CD4-positive, alpha-beta T cell (primary cell): ENCODE measurements at regions of chr15 and their contacts with region 1.

Region 1: DNA sequence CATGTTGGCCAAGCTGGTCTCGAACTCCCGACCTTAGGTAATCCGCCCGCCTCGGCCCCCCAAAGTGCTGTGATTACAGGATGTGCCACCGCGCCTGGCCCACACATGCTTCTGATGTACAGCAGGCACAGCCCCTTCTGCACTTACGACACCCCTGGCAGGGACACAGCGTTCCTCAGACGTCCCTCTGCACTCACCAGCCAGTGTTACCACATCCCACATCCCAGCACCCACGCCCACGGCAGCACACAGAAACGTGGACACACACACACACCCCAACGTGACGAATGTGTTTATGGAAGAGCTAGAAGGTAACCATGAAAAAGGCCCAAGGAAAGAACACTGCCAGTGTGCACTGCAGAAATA is 576 bp upstream of the RPAP1 start:
- DNase-seq: peak in 3 of 14 experiments; percentile 23 to 50 (median 44)
- ATAC-seq: no peak
- H3K4me3 ChIP-seq: peak overlapping the region; percentile 98
- H3K4me3 Mint-ChIP-seq: peak overlapping the region; percentile 98
- H3K27ac ChIP-seq: no peak overlapping the region
- H3K27ac Mint-ChIP-seq: peak overlapping the region; percentile 85
- H3K4me1 ChIP-seq: peaks cover 16% of the 10 kb centered on the region
- H3K4me1 Mint-ChIP-seq: peaks cover 29% of the 10 kb centered on the region
- H3K27me3 ChIP-seq: no peaks in the 10 kb centered on the region
- H3K27me3 Mint-ChIP-seq: no peaks in the 10 kb centered on the region
- CTCF ChIP-seq: no peak

Region 2: DNA sequence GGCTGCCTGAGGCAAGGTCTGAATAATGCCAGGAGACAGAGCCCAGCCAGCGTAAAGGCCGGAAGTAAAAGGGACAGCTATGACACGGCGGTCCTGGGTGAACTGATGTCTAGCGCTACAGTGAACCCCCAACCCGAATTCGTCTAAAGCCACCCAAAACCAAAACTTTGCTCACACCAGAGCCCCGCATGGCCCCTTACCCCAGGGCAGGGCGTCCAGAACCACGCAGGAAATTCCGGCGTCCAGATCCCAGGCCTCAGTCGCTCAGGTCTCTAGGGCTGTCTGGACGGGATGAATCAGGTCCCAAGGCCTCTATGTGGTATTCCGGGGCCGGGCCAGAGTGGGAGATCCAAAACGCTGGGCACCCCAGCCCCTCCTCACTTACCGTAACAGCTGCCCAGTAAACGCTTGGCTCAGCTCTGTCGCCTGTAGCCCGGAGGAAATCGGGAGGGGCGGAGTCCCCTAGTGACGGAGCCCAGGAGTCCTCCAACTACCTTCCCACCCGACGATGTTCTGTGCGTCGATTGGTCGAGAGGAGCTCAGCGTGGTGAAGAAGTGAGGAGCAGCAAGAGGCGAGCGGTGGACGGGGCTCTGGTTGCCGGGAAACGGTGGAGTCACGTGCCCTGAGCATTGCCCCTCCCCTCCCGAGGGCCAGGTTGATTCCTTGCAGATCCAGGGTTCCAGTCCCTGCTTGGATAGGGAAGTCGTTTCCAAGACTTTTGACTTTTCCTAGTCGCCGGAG is 979.9 kb before region 1 on chr15 and contains the start of gene CCDC32:
- CTCF ChIA-PET with region 1: no interaction called
- POLR2A ChIA-PET with region 1: no interaction called
- intact Hi-C with region 1: loop called in 1 of 2 experiments (anchors 10 kb)
- DNase-seq: peak; percentile 84 to 99 (median 92)
- ATAC-seq: peak; percentile 93
- H3K4me3 ChIP-seq: peak within 1 kb of the TSS; percentile 76
- H3K4me3 Mint-ChIP-seq: peak within 1 kb of the TSS; percentile 97
- H3K27ac ChIP-seq: peak within 1 kb of the TSS; percentile 85 to 89
- H3K27ac Mint-ChIP-seq: peak within 1 kb of the TSS; percentile 88
- H3K4me1 ChIP-seq: peaks cover 34% of the 10 kb centered on the region
- H3K4me1 Mint-ChIP-seq: peaks cover 43% of the 10 kb centered on the region
- H3K27me3 ChIP-seq: no peaks in the 10 kb centered on the region
- H3K27me3 Mint-ChIP-seq: no peaks in the 10 kb centered on the region
- CTCF ChIP-seq: no peak
- total RNA-seq, gene CCDC32: 20.9 to 21.3 TPM

Region 3: DNA sequence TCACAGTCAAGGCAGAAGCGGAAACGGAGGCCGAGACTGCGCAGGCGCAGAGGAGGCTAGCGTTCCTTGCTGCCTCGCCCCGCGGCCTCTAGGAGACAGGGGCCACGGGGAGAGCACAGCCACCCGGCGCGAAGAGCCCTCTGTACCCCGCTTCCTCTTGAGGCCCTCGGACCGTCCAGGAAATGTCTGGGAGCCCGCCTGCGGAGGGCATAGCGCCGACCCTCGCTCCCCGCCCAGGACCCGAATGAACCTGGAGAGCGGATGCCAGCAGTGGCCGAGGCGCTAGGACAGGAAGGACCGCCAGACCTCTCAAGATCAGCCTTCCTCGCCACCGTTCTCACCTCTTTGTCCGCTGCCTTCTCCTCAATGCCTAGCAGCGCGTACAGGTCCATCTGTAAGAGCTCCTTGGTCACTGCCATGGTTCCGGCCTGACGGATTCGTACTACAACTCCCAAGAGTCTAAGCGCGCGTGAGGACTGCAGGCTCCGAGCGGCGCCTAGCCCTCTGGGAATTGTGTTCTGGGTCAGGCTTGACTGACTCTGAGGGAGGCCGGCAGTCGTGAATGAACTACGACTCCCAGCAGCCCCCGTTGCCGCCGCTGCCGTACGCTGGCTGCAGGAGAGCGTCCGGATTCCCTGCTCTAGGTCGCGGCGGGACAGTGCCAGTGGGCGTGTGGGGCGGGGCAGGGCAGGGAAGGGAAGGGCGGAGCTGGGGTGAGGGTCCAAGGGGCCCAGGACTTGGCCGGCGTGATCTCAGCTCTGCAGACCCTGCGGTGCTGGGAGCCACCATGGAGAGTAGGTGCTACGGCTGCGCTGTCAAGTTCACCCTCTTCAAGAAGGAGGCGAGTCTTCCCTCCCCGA is 737.4 kb before region 1 on chr15 and contains the starts of genes DNAJC17 and ZFYVE19:
- CTCF ChIA-PET with region 1: no interaction called
- POLR2A ChIA-PET with region 1: no interaction called
- intact Hi-C with region 1: loop called in 1 of 2 experiments (anchors 5 kb)
- DNase-seq: peak; percentile 86 to 97 (median 92)
- ATAC-seq: peak; percentile 97
- H3K4me3 ChIP-seq: peak within 1 kb of the TSS; percentile 80
- H3K4me3 Mint-ChIP-seq: peak within 1 kb of the TSS; percentile 96
- H3K27ac ChIP-seq: peak within 1 kb of the TSS; percentile 90 to 93
- H3K27ac Mint-ChIP-seq: peak within 1 kb of the TSS; percentile 91
- H3K4me1 ChIP-seq: peaks cover 30% of the 10 kb centered on the region
- H3K4me1 Mint-ChIP-seq: peaks cover 23% of the 10 kb centered on the region
- H3K27me3 ChIP-seq: no peaks in the 10 kb centered on the region
- H3K27me3 Mint-ChIP-seq: no peaks in the 10 kb centered on the region
- CTCF ChIP-seq: no peak
- total RNA-seq, gene DNAJC17: 14.4 to 17.9 TPM
- total RNA-seq, gene ZFYVE19: 12.0 to 13.0 TPM

Region 4: DNA sequence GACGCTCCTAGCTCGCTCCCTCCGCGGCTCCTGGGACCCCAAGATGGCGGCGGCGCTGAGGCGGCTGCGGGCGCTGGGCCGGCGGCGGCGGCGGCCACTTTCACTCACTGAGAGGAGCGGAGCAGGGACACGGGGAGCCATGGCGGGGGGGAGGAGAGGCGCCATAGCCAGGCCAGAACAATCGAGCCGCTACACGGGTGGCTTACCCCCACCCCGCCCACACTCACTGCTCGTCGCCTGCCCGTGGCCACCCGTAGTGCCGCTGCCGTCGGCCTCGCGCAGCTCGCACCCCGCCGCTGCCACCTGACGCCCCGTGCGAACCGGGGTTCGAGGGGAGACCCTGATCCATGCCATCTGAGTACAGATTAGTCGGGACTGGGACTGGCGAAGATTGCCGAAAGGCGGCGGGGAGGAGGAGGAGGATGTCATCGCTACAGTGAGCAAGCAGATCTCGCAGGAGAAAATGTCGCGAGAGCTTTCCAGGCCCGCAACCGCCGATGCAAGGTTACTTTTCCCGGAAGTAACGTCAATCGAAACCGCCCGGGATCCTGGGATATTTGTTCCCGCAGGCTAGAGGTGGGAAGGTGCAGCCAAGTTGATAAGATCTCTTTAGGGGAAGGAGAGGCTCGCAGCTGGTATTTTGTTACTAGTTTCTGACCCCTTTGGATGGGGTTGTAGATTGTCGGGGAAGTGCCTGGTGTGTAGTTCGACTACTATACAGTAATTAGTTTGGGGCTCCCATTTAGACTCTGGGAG is 428.3 kb before region 1 on chr15 and contains the start of gene INO80:
- CTCF ChIA-PET with region 1: no interaction called
- POLR2A ChIA-PET with region 1: interaction called, 5 read pairs
- intact Hi-C with region 1: loop called in 1 of 2 experiments (anchors 10 kb)
- DNase-seq: peak; percentile 90 to 98 (median 95)
- ATAC-seq: peak; percentile 79
- H3K4me3 ChIP-seq: peak within 1 kb of the TSS; percentile 99
- H3K4me3 Mint-ChIP-seq: peak within 1 kb of the TSS; percentile 93
- H3K27ac ChIP-seq: peak within 1 kb of the TSS; percentile 79 to 91
- H3K27ac Mint-ChIP-seq: peak within 1 kb of the TSS; percentile 98
- H3K4me1 ChIP-seq: peaks cover 20% of the 10 kb centered on the region
- H3K4me1 Mint-ChIP-seq: peaks cover 25% of the 10 kb centered on the region
- H3K27me3 ChIP-seq: no peaks in the 10 kb centered on the region
- H3K27me3 Mint-ChIP-seq: no peaks in the 10 kb centered on the region
- CTCF ChIP-seq: no peak
- total RNA-seq, gene INO80: 20.3 to 22.9 TPM

Region 5: GRCh38 chr15:41331833-41332787 is 212.5 kb before region 1 on chr15 and contains the start of gene OIP5:
- CTCF ChIA-PET with region 1: no interaction called
- POLR2A ChIA-PET with region 1: no interaction called
- intact Hi-C with region 1: loop called in 1 of 2 experiments (anchors 10 kb)
- DNase-seq: peak; percentile 94 to 99 (median 97)
- ATAC-seq: peak; percentile 96
- H3K4me3 ChIP-seq: peak within 1 kb of the TSS; percentile 77
- H3K4me3 Mint-ChIP-seq: peak within 1 kb of the TSS; percentile 95
- H3K27ac ChIP-seq: peak within 1 kb of the TSS in 1 of 2 donors; percentile 38
- H3K27ac Mint-ChIP-seq: peak within 1 kb of the TSS; percentile 78
- H3K4me1 ChIP-seq: peaks cover 21% of the 10 kb centered on the region
- H3K4me1 Mint-ChIP-seq: peaks cover 19% of the 10 kb centered on the region
- H3K27me3 ChIP-seq: no peaks in the 10 kb centered on the region
- H3K27me3 Mint-ChIP-seq: no peaks in the 10 kb centered on the region
- CTCF ChIP-seq: peak; percentile 58
- total RNA-seq, gene OIP5: 0.20 to 0.36 TPM

Region 6: DNA sequence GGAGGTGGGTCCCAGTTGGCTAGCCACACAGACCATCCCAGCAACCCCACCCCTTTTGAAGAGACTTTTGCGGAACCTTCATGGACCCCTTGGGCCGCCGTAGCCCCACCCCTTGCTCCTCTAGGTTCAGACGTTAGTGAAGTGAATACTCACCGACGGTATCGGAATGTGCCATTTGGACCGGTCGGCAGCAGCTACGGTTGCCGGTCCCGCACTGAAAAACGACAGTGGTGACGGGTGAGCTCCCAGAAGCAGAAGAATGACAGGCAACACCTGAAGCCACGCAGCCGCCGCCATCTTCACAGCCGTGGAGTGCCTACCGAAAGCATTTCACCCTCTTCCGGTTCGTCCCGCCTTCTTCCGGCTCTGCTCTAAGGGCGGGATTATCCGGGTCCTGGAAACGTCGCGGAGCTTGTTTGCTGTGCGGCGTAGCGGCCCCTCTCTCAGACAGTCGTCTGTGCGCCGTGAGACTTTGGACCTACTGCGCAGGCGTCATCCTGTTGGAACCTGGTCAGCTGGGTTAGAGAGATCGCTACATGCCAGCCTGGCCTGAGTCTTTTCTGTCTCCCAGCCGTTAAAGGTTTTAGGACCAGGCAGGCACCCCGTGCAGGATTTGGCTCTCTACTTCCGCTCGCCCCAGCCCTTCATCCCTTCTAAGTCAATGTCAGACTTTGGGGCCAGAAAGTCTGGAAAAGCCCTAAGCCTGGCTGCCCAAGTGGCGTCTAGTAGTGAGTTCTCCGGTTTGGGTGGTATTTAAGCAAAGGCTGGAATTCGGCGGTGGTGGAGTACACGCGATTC is 728.7 kb after region 1 on chr15 and contains the starts of genes GANC and TMEM87A:
- CTCF ChIA-PET with region 1: no interaction called
- POLR2A ChIA-PET with region 1: no interaction called
- intact Hi-C with region 1: loop called in 1 of 2 experiments (anchors 5 kb)
- DNase-seq: peak; percentile 90 to 99 (median 94)
- ATAC-seq: peak; percentile 89
- H3K4me3 ChIP-seq: peak within 1 kb of the TSS; percentile 70
- H3K4me3 Mint-ChIP-seq: peak within 1 kb of the TSS; percentile 90
- H3K27ac ChIP-seq: peak within 1 kb of the TSS; percentile 92 to 95
- H3K27ac Mint-ChIP-seq: peak within 1 kb of the TSS; percentile 98
- H3K4me1 ChIP-seq: peaks cover 12% of the 10 kb centered on the region
- H3K4me1 Mint-ChIP-seq: peaks cover 76% of the 10 kb centered on the region
- H3K27me3 ChIP-seq: no peaks in the 10 kb centered on the region
- H3K27me3 Mint-ChIP-seq: no peaks in the 10 kb centered on the region
- CTCF ChIP-seq: no peak
- total RNA-seq, gene GANC: 22.3 to 23.9 TPM
- total RNA-seq, gene TMEM87A: 48.7 to 51.4 TPM